Activated CD8-positive, alpha-beta memory T cell treated with anti-CD3 and anti-CD28 coated beads, Interleukin-2, amount 10 ng/mL, durations not matched to agents 7 days and 5 days (primary cell): ENCODE measurements at regions of chr15 and their contacts with region 1.

Region 1: GRCh38 chr15:52179278-52180195 is 11.7 kb downstream of the GNB5 start:
- DNase-seq: peak; percentile 94
- ATAC-seq: peak; percentile 88
- H3K4me3 Mint-ChIP-seq: peak overlapping the region; percentile 82
- H3K27ac Mint-ChIP-seq: peak overlapping the region; percentile 96
- H3K4me1 Mint-ChIP-seq: peaks cover 36% of the 10 kb centered on the region
- H3K27me3 Mint-ChIP-seq: no peaks in the 10 kb centered on the region

Region 2: GRCh38 chr15:52163321-52164190 is 16.0 kb before region 1 on chr15:
- CTCF ChIA-PET with region 1: interaction called, 13 read pairs
- DNase-seq: no peak
- ATAC-seq: no peak
- H3K4me3 Mint-ChIP-seq: no peak overlapping the region
- H3K27ac Mint-ChIP-seq: no peak overlapping the region
- H3K4me1 Mint-ChIP-seq: peaks cover 16% of the 10 kb centered on the region
- H3K27me3 Mint-ChIP-seq: no peaks in the 10 kb centered on the region

Region 3: DNA sequence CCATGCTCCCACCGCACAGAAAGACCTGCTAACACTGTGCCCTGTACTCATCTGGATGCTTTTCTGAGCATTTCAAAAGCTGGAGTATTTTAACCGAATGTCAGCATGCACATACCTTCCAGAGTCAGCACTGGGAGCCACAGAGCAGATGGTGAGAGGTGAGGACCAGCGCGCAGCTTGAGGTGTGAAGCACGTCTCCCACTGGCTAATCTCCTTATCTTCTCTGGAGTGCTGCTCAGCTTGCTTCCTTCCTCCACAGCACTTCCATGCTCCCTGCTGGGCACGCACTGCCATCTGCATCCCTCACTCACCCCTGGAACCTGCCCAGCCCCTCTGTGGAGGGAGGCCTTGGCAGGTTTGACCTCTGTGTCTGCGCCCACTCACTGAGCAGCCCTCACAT is 11.7 kb after region 1 on chr15 and contains the start of gene GNB5:
- CTCF ChIA-PET with region 1: interaction called, 10 read pairs
- DNase-seq: no peak
- ATAC-seq: no peak
- H3K4me3 Mint-ChIP-seq: no peak within 1 kb of the TSS
- H3K27ac Mint-ChIP-seq: no peak within 1 kb of the TSS
- H3K4me1 Mint-ChIP-seq: no peaks in the 10 kb centered on the region
- H3K27me3 Mint-ChIP-seq: no peaks in the 10 kb centered on the region
- total RNA-seq, gene GNB5: 27.9 to 39.5 TPM